Activated T-helper 2 cell treated with anti-CD3 and anti-CD28 coated beads, Interferon-gamma antibody, Interleukin-2, Interleukin-4, amounts not matched to agents 10 μg/mL and 5 μg/mL and 100 μg/mL, durations not matched to agents 14 hours and 24 hours and 36 hours (primary cell): ENCODE measurements at regions of chr3 and their contacts with region 1.

Region 1: GRCh38 chr3:72818092-72818773 is 30.0 kb downstream of the SHQ1 start:
- DNase-seq: no peak
- H3K4me3 Mint-ChIP-seq: no peak overlapping the region
- H3K27ac Mint-ChIP-seq: no peak overlapping the region
- H3K4me1 Mint-ChIP-seq: peaks cover 40% of the 10 kb centered on the region
- H3K27me3 Mint-ChIP-seq: no peaks in the 10 kb centered on the region

Region 2: DNA sequence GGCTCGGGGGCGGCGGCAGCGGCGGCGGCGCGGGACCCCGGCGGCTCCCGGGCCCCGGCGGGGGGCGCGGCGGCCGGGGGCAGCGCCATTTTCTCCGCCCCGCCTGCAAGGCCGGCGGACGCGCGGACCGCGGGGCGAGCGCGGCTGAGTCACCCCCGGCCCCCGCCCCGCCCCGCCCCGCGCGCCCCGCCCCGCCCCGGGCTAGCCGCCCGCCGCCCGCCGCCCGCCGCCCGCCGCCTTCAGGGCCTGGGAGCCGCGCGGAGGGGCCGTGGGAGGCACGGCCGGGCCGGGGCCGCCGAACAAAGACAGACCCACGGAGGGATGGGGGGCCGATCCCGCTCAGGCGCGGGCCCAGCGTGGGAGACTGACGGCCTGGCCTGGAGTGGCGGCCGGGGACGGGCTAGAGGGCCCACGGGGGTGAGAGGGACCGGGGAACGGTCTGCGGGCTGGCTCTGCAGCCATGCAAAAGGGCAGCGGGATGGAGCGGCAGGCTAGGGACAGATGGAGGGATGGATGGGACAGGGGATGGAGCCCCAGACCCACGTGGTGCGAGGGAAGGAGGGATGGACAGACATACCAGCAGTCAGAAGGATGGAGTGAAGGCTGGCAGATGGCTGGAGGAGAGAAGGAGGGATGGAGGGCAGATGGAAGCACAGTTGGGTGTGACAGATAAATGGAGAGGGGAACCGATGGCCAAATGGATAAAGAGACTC is 1092.8 kb before region 1 on chr3 and contains the start of gene EIF4E3:
- intact Hi-C with region 1: loop called (anchors 5 kb)
- DNase-seq: peak; percentile 28
- H3K4me3 Mint-ChIP-seq: peak within 1 kb of the TSS; percentile 88
- H3K27ac Mint-ChIP-seq: peak within 1 kb of the TSS; percentile 89
- H3K4me1 Mint-ChIP-seq: peaks cover 63% of the 10 kb centered on the region
- H3K27me3 Mint-ChIP-seq: peaks cover 2% of the 10 kb centered on the region
- total RNA-seq, gene EIF4E3: 17.3 and 17.9 TPM in 2 replicates

Region 3: GRCh38 chr3:72265256-72266015 is 552.8 kb before region 1 on chr3:
- intact Hi-C with region 1: loop called (anchors 5 kb)
- DNase-seq: no peak
- H3K4me3 Mint-ChIP-seq: no peak overlapping the region
- H3K27ac Mint-ChIP-seq: peak overlapping the region; percentile 56
- H3K4me1 Mint-ChIP-seq: peaks cover 42% of the 10 kb centered on the region
- H3K27me3 Mint-ChIP-seq: no peaks in the 10 kb centered on the region

Region 4: DNA sequence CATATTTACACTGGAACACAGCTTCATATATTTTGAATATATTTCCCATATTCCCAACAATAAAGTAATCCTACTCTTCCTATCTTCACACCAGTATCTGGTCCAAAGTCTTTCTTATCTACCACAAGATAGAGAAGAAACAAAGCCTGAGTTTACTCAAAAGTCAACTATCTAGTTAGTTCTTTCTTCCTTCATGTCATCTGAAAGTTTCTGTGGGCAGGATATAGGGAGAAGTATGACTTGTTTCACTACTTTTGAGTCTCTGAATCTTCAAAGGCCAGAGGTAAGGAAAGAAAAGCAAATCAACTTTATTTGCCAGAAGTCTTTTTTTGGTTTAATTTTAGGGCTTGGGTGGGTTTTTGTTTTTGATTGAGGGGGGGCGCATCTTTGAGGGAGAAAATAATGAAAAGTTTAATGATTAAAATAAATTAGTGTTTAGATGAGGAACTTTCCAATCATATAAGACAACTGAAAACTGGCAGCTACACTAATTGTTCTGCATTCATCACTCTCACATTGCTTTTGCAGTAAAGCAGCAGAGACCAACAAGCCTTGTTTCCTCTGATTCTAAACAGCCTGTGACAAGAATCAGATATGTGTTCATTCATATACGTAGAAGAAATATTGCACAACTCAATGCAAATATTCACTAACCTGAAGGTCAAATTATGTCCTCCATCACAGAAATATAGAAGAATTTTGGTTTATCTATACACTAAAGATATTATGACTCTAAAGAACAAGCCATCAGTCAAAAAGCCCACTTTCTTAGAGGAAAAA is 391.4 kb before region 1 on chr3:
- intact Hi-C with region 1: loop called (anchors 5 kb)
- DNase-seq: no peak
- H3K4me3 Mint-ChIP-seq: peak overlapping the region; percentile 67
- H3K27ac Mint-ChIP-seq: peak overlapping the region; percentile 96
- H3K4me1 Mint-ChIP-seq: peaks cover 71% of the 10 kb centered on the region
- H3K27me3 Mint-ChIP-seq: no peaks in the 10 kb centered on the region

Region 5: GRCh38 chr3:72629191-72629631 is 189.0 kb before region 1 on chr3:
- intact Hi-C with region 1: loop called (anchors 5 kb)
- DNase-seq: no peak
- H3K4me3 Mint-ChIP-seq: peak overlapping the region; percentile 5
- H3K27ac Mint-ChIP-seq: peak overlapping the region; percentile 86
- H3K4me1 Mint-ChIP-seq: peaks cover 58% of the 10 kb centered on the region
- H3K27me3 Mint-ChIP-seq: no peaks in the 10 kb centered on the region

Region 6: GRCh38 chr3:72756900-72757299 is 61.3 kb before region 1 on chr3:
- intact Hi-C with region 1: loop called (anchors 2 kb)
- DNase-seq: peak; percentile 53
- H3K4me3 Mint-ChIP-seq: no peak overlapping the region
- H3K27ac Mint-ChIP-seq: peak overlapping the region; percentile 45
- H3K4me1 Mint-ChIP-seq: peaks cover 34% of the 10 kb centered on the region
- H3K27me3 Mint-ChIP-seq: no peaks in the 10 kb centered on the region

Region 7: DNA sequence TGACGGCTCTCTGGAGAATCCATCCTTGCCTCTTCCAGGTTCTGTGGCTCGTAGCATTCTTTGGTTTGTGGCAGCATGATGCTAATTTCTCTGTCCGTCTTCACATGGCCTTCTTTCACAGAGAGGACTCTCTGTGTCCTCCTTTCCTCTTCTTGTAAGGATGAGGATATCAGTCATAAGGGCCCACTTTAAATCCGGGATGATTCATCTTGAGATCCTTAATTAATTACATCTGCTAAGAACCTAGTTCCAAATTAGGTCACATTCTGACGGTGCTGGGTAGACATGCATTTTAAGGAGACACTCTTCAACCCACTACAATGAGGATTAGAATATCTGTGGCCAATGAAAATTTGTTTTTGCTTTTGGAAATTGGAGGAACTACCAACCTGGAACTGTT is 54.0 kb after region 1 on chr3:
- intact Hi-C with region 1: no loop called
- DNase-seq: no peak
- H3K4me3 Mint-ChIP-seq: no peak overlapping the region
- H3K27ac Mint-ChIP-seq: no peak overlapping the region
- H3K4me1 Mint-ChIP-seq: no peaks in the 10 kb centered on the region
- H3K27me3 Mint-ChIP-seq: peaks cover 14% of the 10 kb centered on the region